ENCODE measurements at regions of chr17 and their contacts with region 1.

Region 1: DNA sequence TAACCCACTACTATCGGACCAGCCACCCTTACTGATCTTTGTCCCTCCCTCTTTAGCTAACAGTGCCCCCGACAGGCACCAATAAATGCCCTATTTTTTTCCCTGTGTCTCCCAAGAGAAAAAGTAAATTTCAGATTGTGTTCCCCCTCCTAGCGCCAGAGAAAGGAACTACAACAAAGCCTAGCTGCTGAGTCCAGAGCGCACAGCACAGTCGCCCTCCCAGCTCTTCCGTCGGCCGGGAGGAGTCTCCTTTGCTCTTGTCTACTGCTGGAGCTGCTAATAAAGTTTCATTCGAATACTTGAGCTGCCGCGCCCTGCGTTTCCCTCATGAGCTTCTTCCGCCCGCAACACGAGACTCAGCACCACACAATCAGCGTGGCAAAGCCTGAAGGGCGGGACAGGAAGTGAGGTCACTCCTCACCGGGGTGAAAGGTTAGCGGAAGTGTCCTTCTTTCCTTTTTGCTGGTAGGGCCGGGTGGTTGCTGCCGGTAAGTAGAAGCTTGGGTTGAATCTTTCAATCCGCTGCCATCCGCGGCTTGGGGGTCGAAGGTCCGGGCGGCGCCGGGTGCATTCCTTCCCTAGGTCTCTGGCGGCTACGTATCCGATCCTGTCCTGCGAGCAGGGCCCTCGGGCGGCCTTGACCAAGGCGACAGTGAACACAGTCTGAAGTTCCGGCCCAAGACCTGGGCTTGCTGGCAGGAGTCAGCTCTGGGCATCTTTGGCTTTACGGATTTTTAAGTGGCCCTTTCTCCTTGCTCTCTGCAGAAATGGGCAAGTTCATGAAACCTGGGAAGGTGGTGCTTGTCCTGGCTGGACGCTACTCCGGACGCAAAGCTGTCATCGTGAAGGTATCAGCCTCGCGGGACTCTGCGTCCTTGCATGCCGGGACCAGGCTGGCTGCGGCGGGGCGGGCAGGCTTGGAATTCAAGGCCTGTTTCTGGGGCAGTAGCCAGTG is at the start of gene RPL27:
- DNase-seq: peak; percentile 97
- H3K4me3 Mint-ChIP-seq: peak within 1 kb of the TSS; percentile 93
- H3K27ac Mint-ChIP-seq: peak within 1 kb of the TSS; percentile 97
- H3K4me1 Mint-ChIP-seq: peaks cover 22% of the 10 kb centered on the region
- H3K27me3 Mint-ChIP-seq: no peaks in the 10 kb centered on the region
- total RNA-seq, gene RPL27: 1,137 and 1,172 TPM in 2 replicates

Region 2: DNA sequence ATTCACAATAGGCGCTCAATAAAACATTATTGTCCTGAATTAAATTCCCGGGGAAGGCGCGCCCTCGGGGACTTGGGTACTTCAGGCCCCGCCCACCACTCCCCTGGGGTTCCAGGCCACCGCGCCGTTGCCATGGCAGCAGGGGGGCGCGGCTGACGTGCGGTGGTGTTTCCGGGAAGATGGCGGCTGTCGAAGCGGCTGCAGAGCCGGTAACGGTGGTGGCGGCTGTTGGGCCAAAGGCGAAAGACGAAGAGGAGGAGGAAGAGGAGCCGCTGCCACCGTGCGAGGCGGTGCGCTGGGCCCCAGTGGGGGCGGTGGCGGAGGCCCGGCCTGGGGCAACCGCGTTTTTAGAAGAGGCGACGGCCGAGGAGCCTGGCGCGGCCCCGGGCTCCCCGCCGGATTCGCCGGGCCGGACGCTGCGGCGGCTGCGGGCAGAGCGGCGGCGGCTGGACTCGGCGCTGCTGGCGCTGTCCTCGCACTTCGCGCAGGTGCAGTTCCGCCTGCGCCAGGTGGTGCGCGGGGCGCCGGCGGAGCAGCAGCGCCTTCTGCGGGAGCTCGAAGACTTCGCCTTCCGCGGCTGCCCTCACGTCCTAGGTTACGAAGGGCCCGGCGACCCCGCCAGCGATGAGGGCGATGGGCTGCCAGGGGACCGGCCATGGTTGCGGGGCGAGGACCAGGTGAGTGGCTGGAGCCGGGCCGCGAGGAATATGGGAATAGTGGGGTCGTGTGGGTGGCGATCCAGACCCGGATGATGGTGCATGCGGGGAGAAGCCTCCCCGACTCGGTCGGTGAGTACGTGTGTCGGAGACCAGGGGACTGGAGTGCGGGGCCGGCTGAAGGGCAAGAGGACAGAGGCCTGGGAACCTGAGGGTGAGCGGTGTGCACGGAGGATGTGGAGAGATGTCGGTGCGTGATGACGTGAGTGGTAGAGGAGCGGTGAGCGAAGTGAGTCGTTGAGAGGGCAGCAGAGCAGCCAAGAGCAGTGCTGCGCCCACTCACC is 17.6 kb before region 1 on chr17 and contains the start of gene RUNDC1:
- intact Hi-C with region 1: loop called (anchors 1 kb)
- DNase-seq: peak; percentile 87
- H3K4me3 Mint-ChIP-seq: peak within 1 kb of the TSS; percentile 99
- H3K27ac Mint-ChIP-seq: peak within 1 kb of the TSS; percentile 96
- H3K4me1 Mint-ChIP-seq: peaks cover 26% of the 10 kb centered on the region
- H3K27me3 Mint-ChIP-seq: no peaks in the 10 kb centered on the region
- total RNA-seq, gene RUNDC1: 18.7 and 19.9 TPM in 2 replicates

Region 3: DNA sequence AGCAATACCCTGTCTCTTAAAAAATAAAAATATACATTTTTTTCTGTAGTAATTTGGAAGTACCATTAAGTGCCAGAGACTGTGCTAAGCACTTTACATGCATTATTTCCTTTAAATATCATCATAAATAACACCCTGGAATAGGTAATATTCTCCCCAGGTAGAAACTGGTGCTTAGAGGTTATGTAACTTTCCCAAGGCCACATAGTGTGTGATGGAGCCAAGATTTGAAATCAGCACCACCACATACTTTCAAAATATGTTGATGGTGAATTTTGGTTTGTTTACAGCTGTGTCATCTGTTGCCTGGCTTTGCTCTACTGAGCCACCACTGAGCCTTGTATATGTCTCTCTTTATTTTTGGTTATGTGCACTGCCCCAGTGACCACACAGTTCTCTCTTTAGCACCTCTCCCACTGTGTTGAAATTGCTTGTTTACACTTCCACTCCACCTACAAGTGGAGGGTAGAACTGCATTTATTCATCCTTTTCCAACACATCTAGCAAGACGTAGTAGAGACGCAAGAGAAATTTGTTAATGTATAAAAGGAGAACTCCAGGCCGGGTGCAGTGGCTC is 153.7 kb after region 1 on chr17:
- intact Hi-C with region 1: no loop called
- DNase-seq: no peak
- H3K4me3 Mint-ChIP-seq: no peak overlapping the region
- H3K27ac Mint-ChIP-seq: no peak overlapping the region
- H3K4me1 Mint-ChIP-seq: no peaks in the 10 kb centered on the region
- H3K27me3 Mint-ChIP-seq: no peaks in the 10 kb centered on the region